Naive thymus-derived CD4-positive, alpha-beta T cell (primary cell): ENCODE measurements at regions of chr3 and their contacts with region 1.

Region 1: DNA sequence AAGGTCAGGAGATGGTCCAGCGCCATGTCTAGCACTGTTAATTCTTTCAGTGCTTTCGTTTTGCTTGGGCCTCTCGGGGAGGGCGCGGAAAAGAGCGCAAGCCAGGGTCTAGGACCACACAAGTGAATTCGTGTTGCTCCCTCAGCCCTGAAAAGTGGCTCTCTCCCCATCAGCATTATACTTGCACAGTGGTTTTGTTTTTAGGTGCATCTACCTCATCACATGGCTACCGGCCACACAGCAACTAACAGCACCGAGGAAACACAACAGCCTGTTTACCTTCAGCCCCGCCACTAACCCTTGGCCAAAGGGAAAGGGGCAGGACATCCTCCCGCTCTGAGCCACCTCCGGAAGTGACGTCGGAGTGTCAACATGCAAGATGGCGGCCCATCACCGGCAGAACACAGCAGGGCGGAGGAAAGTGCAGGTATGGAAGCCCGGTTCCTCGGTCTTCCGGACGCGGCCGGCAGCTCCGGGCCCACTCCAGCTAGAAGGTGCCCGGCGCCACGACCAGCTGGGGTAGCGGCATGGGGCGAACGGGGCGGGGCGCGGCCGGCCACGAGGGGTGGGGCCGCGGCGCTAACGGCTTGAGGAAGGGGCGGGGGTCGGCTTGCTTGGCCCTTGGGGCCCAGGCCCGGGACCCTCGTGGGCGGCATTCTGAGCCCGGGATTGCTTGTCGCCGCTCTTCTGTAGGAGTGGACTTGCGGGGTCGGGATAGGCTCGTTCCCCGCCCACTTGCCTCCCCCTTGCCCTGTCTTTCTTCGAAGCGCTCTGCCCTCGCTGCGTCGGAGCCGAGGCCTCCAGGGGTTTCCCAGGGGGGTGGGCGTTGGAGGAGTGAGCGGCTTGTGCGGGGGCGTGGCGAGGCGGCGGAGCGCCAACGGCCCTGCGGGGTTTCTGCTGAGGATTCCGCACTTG is at the starts of genes SCN11A and WDR48:
- DNase-seq: peak; percentile 78 to 95 (median 90)
- ATAC-seq: peak; percentile 93
- H3K4me3 ChIP-seq: peak within 1 kb of the TSS; percentile 80
- H3K4me3 Mint-ChIP-seq: peak within 1 kb of the TSS; percentile 91 to 99 (median 99)
- H3K27ac ChIP-seq: peak within 1 kb of the TSS; percentile 98
- H3K27ac Mint-ChIP-seq: peak within 1 kb of the TSS; percentile 95 to 100 (median 99)
- H3K4me1 ChIP-seq: peaks cover 7 to 16% of the 10 kb centered on the region in 2 donors
- H3K4me1 Mint-ChIP-seq: peaks cover 32 to 81% (median 77%) of the 10 kb centered on the region in 7 donors
- H3K27me3 ChIP-seq: no peaks in the 10 kb centered on the region
- H3K27me3 Mint-ChIP-seq: no peaks in the 10 kb centered on the region
- total RNA-seq, gene SCN11A: 0.07 to 0.32 (median 0.19) TPM
- total RNA-seq, gene WDR48: 46.7 to 97.7 (median 68.0) TPM

Region 2: GRCh38 chr3:38651154-38651789 is 400.6 kb before region 1 on chr3:
- CTCF ChIA-PET with region 1: no interaction called
- POLR2A ChIA-PET with region 1: no interaction called
- intact Hi-C with region 1: loop called in 1 of 2 experiments (anchors 5 kb)
- DNase-seq: peak; percentile 38 to 73 (median 66)
- ATAC-seq: peak; percentile 73
- H3K4me3 ChIP-seq: peak overlapping the region; percentile 34
- H3K4me3 Mint-ChIP-seq: no peak overlapping the region
- H3K27ac ChIP-seq: no peak overlapping the region
- H3K27ac Mint-ChIP-seq: no peak overlapping the region
- H3K4me1 ChIP-seq: peaks cover 5 to 6% of the 10 kb centered on the region in 2 donors
- H3K4me1 Mint-ChIP-seq: peaks cover 0 to 10% (median 8%) of the 10 kb centered on the region in 7 donors
- H3K27me3 ChIP-seq: peaks cover 10 to 11% of the 10 kb centered on the region in 2 donors
- H3K27me3 Mint-ChIP-seq: peaks cover 4 to 23% (median 16%) of the 10 kb centered on the region in 5 donors

Region 3: DNA sequence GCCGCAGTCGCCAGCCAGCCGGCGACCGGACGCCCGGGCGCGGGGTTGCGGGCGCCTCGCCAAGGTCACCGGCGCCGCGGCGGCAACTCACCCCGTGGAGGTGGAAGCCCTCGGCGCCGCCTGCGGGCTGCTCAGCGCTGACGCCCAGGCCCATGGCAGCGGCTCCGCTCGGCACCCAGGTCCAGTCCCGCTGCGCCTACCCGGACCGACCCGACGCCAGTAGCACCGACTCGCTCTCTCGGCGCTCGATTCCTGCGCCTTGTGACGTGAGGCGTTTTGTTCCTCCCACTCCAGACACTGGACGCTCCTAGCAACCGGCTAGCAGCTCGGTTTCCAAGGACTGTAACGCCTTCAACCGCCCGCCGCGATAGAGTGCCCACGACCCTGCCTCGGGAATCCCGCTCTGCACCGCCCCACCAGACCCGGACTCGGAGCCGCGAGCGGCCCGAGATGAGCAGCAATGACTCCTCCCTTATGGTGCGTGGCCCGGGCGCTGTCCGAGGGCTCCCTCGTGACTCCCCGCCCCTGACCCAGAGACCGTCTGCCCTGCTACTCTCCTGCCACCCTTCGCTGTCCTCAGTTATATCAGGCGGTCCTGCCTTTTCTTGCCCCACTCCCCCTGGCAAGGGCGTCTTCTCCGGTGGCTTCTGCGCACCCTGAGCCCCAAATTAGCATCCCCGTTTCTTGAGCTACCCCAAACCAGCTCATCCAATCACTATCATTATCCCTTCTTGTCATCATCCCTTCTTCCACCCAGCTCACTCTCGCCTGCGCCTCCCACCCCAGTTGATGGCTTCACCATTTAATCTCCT is 55.7 kb after region 1 on chr3 and contains the starts of genes GORASP1 and TTC21A:
- CTCF ChIA-PET with region 1: no interaction called
- POLR2A ChIA-PET with region 1: interaction called, 3 read pairs
- intact Hi-C with region 1: loop called (anchors 1 kb)
- DNase-seq: peak; percentile 33 to 79 (median 53)
- ATAC-seq: peak; percentile 74
- H3K4me3 ChIP-seq: peak within 1 kb of the TSS; percentile 95
- H3K4me3 Mint-ChIP-seq: peak within 1 kb of the TSS; percentile 88 to 100 (median 96)
- H3K27ac ChIP-seq: peak within 1 kb of the TSS; percentile 78
- H3K27ac Mint-ChIP-seq: peak within 1 kb of the TSS; percentile 84 to 96 (median 92)
- H3K4me1 ChIP-seq: peaks cover 18 to 22% of the 10 kb centered on the region in 2 donors
- H3K4me1 Mint-ChIP-seq: peaks cover 45 to 62% (median 52%) of the 10 kb centered on the region in 7 donors
- H3K27me3 ChIP-seq: no peaks in the 10 kb centered on the region
- H3K27me3 Mint-ChIP-seq: peaks cover 0 to 5% (median 0%) of the 10 kb centered on the region in 5 donors
- total RNA-seq, gene GORASP1: 28.2 to 58.5 (median 44.6) TPM
- total RNA-seq, gene TTC21A: 2.8 to 9.7 (median 5.3) TPM

Region 4: GRCh38 chr3:39279745-39280517 is 228.0 kb after region 1 on chr3 and contains the start of gene CX3CR1:
- CTCF ChIA-PET with region 1: no interaction called
- POLR2A ChIA-PET with region 1: no interaction called
- intact Hi-C with region 1: no loop called
- DNase-seq: no peak
- ATAC-seq: peak; percentile 55
- H3K4me3 ChIP-seq: peak within 1 kb of the TSS; percentile 38
- H3K4me3 Mint-ChIP-seq: peak within 1 kb of the TSS in 2 of 10 donors; percentile 66 to 90
- H3K27ac ChIP-seq: no peak within 1 kb of the TSS
- H3K27ac Mint-ChIP-seq: peak within 1 kb of the TSS in 2 of 9 donors; percentile 13 to 61
- H3K4me1 ChIP-seq: peaks cover 0 to 9% of the 10 kb centered on the region in 2 donors
- H3K4me1 Mint-ChIP-seq: peaks cover 7 to 66% (median 9%) of the 10 kb centered on the region in 7 donors
- H3K27me3 ChIP-seq: no peaks in the 10 kb centered on the region
- H3K27me3 Mint-ChIP-seq: peaks cover 0 to 20% (median 0%) of the 10 kb centered on the region in 5 donors
- total RNA-seq, gene CX3CR1: 0.54 to 66.6 (median 3.3) TPM

Region 5: GRCh38 chr3:39383045-39383880 is 331.4 kb after region 1 on chr3 and contains the start of gene SLC25A38:
- CTCF ChIA-PET with region 1: no interaction called
- POLR2A ChIA-PET with region 1: no interaction called
- intact Hi-C with region 1: loop called in 1 of 2 experiments (anchors 1 kb)
- DNase-seq: peak; percentile 60 to 86 (median 84)
- ATAC-seq: peak; percentile 86
- H3K4me3 ChIP-seq: peak within 1 kb of the TSS; percentile 88
- H3K4me3 Mint-ChIP-seq: peak within 1 kb of the TSS; percentile 91 to 99 (median 97)
- H3K27ac ChIP-seq: peak within 1 kb of the TSS; percentile 96
- H3K27ac Mint-ChIP-seq: peak within 1 kb of the TSS; percentile 95 to 100 (median 99)
- H3K4me1 ChIP-seq: peaks cover 26 to 39% of the 10 kb centered on the region in 2 donors
- H3K4me1 Mint-ChIP-seq: peaks cover 36 to 59% (median 49%) of the 10 kb centered on the region in 7 donors
- H3K27me3 ChIP-seq: no peaks in the 10 kb centered on the region
- H3K27me3 Mint-ChIP-seq: no peaks in the 10 kb centered on the region
- total RNA-seq, gene SLC25A38: 30.3 to 50.2 (median 46.8) TPM

Region 6: GRCh38 chr3:40524568-40525285 is 1472.8 kb after region 1 on chr3 and contains the start of gene ZNF621:
- CTCF ChIA-PET with region 1: no interaction called
- POLR2A ChIA-PET with region 1: no interaction called
- intact Hi-C with region 1: loop called in 1 of 2 experiments (anchors 10 kb)
- DNase-seq: peak; percentile 43 to 90 (median 73)
- ATAC-seq: peak; percentile 99
- H3K4me3 ChIP-seq: peak within 1 kb of the TSS; percentile 69
- H3K4me3 Mint-ChIP-seq: peak within 1 kb of the TSS; percentile 85 to 97 (median 96)
- H3K27ac ChIP-seq: peak within 1 kb of the TSS; percentile 81
- H3K27ac Mint-ChIP-seq: peak within 1 kb of the TSS; percentile 91 to 98 (median 97)
- H3K4me1 ChIP-seq: peaks cover 0 to 15% of the 10 kb centered on the region in 2 donors
- H3K4me1 Mint-ChIP-seq: peaks cover 17 to 39% (median 27%) of the 10 kb centered on the region in 7 donors
- H3K27me3 ChIP-seq: no peaks in the 10 kb centered on the region
- H3K27me3 Mint-ChIP-seq: no peaks in the 10 kb centered on the region
- total RNA-seq, gene ZNF621: 14.6 to 26.9 (median 21.9) TPM